ENCODE measurements at regions of chr11 and their contacts with region 1.

Region 1: DNA sequence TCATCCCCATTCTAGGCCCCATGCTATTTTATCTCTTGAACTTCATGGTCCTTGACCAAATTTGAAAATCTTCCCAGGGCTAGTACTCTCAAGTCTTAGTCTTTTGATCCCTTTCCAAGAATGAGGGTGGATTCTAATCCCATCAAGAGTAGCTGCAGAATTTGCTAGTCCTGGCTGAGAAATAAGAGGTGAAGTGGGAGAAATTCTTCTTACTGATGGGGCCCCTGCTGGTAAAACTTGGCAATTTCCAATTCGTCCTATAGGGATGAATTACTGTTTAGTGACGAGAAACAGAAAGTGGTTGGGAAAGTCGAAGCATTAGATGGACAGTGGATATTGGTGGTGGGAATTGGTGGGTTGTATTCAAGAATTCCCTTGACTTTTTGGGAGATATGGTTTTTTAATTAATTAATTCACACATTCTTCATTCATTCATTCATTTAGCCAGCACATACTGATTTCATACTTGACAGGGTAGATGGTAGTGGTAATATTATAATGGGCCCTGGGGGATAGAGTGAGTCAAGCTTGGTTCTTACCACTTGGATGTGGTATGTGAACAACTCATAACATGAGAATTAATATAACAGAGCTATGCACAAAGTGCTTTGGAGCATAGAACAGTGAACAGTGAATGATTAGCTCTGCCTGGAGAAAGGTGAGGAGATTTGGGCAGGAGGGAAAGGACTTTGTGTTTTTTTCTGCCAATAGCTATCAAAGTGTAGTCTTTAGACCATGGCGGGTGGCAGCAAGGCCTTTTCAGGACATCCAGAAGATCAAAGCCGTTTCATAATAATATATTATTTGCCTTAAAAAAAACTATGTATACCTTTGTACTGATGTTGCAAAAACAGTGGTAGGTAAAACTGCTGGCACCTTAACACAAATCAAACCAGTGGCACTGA is 103.8 kb downstream of the STIM1 start:
- DNase-seq: no peak
- H3K4me3 ChIP-seq: no peak overlapping the region
- H3K27ac ChIP-seq: no peak overlapping the region
- H3K4me1 ChIP-seq: peaks cover 9% of the 10 kb centered on the region
- H3K27me3 ChIP-seq: peaks cover 16% of the 10 kb centered on the region
- CTCF ChIP-seq: peak; percentile 13

Region 2: GRCh38 chr11:3854977-3855807 is 104.1 kb before region 1 on chr11 and contains the start of gene STIM1:
- intact Hi-C with region 1: loop called (anchors 10 kb)
- DNase-seq: peak; percentile 95
- H3K4me3 ChIP-seq: peak within 1 kb of the TSS; percentile 92
- H3K27ac ChIP-seq: peak within 1 kb of the TSS; percentile 96
- H3K4me1 ChIP-seq: peaks cover 60% of the 10 kb centered on the region
- H3K27me3 ChIP-seq: peaks cover 21% of the 10 kb centered on the region
- CTCF ChIP-seq: peak; percentile 98
- total RNA-seq, gene STIM1: 32.0 TPM

Region 3: DNA sequence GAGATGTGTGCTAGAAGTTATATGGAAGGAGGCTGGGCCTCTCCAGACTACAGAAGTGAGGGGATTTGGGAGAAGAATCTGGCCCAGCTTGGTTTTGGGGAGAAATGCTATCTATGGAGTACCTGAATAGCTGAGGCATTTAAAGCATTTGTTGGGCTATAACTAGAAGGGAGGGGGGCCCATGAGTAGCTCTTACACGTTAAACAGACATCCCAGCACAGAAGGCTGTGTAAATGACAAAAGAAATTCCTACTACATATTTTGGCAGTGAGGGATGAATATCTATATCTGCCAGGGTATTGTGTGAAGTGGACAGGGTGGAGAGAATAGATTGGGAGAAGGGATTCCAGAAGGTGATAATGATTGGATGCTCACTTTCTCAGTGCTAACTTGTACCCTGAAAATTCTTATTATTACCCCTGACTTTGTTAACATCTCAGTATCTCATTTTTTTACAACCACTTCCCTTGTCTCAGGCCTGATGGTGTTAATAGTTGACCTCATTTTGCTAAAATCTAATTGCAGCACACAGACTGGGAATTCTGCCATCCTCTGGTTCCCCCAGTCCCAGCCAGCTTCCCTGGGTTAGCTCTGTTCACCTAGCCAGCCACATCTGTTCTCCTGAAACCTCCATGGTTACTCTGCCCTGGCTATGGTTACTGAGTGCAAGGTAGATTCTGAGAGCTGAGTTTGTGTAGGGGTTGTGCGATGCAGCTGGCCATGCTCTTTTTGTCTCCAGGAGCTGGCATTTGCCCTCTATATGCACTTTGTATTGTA is 106.5 kb after region 1 on chr11:
- intact Hi-C with region 1: loop called (anchors 10 kb)
- DNase-seq: no peak
- H3K4me3 ChIP-seq: no peak overlapping the region
- H3K27ac ChIP-seq: no peak overlapping the region
- H3K4me1 ChIP-seq: peaks cover 26% of the 10 kb centered on the region
- H3K27me3 ChIP-seq: no peaks in the 10 kb centered on the region
- CTCF ChIP-seq: no peak

Region 4: DNA sequence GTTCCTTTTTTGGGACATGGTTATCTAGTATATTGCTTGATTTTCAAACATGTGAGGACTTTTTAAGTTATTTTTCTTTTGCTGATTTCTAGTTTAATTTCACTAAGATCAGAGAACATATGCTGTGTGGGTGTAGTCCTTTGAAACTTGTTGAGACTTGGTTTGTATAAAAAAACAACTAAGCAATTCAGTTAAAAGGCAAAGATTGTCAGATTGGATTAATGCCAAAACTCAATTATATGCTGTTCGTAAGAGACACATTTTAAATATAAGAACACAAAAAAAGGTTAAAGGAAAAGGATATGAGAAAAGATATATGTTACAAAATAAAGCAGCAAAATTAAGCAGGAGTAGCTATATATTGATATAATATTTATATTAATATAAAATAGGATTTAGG is 117.5 kb after region 1 on chr11:
- intact Hi-C with region 1: no loop called
- DNase-seq: no peak
- H3K4me3 ChIP-seq: no peak overlapping the region
- H3K27ac ChIP-seq: no peak overlapping the region
- H3K4me1 ChIP-seq: peaks cover 12% of the 10 kb centered on the region
- H3K27me3 ChIP-seq: no peaks in the 10 kb centered on the region
- CTCF ChIP-seq: no peak

Region 5: DNA sequence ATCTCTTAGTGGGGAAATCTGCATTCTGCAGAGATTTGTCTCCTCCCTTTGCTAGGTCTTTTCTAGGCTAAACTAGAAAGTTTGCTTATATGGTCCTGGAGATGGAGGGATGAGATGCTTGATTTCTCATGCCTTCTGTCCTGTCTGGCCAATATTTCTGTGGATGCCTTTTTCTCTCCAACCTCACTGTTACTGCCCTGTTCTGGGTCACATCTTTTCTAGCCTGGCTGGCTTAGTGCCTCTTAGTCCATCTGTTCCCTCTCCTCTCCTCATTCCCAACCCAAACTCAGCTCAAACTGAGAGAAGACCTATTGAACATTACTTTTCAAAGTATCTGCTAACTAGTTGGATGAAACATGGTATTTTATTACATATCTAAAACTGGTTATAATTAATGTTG is 197.3 kb after region 1 on chr11:
- intact Hi-C with region 1: no loop called
- DNase-seq: no peak
- H3K4me3 ChIP-seq: no peak overlapping the region
- H3K27ac ChIP-seq: no peak overlapping the region
- H3K4me1 ChIP-seq: no peaks in the 10 kb centered on the region
- H3K27me3 ChIP-seq: no peaks in the 10 kb centered on the region
- CTCF ChIP-seq: no peak

Measured in left ventricle myocardium inferior (tissue), 1 donor.